ENCODE measurements at regions of chr3 and their contacts with region 1.

Region 1: DNA sequence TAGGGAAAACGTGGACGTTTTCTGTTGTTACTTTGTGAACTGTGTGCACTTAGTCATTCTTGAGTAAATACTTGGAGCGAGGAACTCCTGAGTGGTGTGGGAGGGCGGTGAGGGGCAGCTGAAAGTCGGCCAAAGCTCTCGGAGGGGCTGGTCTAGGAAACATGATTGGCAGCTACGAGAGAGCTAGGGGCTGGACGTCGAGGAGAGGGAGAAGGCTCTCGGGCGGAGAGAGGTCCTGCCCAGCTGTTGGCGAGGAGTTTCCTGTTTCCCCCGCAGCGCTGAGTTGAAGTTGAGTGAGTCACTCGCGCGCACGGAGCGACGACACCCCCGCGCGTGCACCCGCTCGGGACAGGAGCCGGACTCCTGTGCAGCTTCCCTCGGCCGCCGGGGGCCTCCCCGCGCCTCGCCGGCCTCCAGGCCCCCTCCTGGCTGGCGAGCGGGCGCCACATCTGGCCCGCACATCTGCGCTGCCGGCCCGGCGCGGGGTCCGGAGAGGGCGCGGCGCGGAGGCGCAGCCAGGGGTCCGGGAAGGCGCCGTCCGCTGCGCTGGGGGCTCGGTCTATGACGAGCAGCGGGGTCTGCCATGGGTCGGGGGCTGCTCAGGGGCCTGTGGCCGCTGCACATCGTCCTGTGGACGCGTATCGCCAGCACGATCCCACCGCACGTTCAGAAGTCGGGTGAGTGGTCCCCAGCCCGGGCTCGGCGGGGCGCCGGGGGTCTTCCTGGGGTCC is at the start of gene TGFBR2:
- DNase-seq: peak; percentile 5 to 89 (median 68)
- H3K4me3 ChIP-seq: peak within 1 kb of the TSS; percentile 46 to 89 (median 77)
- H3K27ac ChIP-seq: peak within 1 kb of the TSS in 56 of 59 donors; percentile 23 to 96 (median 83)
- H3K27me3 ChIP-seq: peaks cover 0 to 38% (median 0%) of the 10 kb centered on the region in 45 donors
- CTCF ChIP-seq: peak in 15 of 56 donors; percentile 8 to 33 (median 15)
- total RNA-seq, gene TGFBR2: 6.9 to 41.8 (median 15.9) TPM

Region 2: DNA sequence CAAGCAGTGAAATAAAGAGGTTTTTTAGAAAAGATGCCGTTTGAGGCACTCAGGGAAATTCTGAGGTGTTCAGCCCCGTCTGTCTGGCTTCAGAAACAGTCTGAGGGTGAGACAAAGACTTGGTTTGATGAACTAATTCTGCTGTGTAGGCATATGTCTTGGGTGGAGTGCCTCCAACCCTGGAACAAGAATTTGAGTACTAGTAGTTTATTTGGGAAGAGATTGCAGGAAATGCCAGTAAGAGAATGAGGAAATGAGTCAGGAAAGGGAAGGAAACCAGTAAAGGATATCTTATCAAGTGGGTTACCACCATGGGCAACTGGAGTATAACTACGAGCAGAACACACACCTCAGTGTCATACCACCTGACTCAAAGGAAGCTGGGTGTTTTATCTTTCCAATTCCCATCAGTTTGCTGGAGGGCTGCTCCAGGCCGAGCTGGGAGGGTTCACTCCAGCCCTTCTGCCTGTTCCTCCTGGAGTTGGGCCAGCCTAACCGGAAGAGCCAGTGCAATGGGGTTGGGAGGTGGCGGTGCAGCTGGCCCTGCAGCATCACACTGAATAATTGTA is 75.3 kb after region 1 on chr3:
- intact Hi-C with region 1: loop called in 1 of 2 experiments (anchors 5 kb)
- DNase-seq: peak in 4 of 10 donors; percentile 26 to 54 (median 39)
- H3K4me3 ChIP-seq: peak overlapping the region in 45 of 59 donors; percentile 0 to 59 (median 27)
- H3K27ac ChIP-seq: peak overlapping the region; percentile 15 to 97 (median 88)
- H3K27me3 ChIP-seq: no peaks in the 10 kb centered on the region
- CTCF ChIP-seq: no peak

Region 3: DNA sequence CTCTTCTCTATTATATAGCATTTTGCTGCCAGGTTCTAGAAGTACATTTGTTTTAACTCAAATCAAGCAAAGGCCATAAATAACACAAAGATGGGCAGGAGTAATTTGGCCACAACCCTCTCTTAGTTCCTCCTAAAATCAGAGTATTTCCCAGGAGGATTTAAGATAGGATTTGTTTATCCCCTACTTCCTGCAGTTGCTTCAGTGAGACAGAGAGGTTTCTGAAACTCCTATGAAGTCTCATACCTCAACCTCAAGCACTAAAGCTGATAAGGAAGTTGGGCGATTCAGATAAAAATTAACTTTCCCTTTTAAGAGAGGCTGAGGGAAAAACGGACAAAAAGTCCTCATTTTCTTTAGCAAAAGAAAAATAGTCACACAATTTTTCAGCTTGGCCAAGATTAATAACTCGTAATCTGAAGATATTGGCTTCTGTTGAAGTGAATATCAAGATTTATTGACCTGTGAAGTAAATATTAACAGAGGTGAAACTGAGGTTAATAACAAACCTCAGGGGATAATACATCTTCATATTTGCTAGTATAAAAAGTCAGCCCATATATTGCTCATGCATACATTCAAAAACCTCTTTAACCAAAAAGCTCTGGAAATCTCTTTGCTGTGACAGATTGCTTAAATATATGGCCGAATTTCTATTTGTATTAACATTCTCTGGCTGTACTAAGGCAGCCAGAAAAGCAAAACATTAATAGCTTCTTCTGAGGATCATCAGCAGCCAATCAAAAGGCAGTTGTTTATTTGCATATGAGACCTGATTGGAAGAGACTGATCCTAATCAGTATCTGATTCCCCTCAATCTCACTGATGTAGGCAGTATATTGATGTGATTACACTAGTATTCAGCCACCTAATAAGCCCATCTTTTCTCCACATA is 378.6 kb after region 1 on chr3:
- intact Hi-C with region 1: no loop called
- DNase-seq: no peak
- H3K4me3 ChIP-seq: no peak overlapping the region
- H3K27ac ChIP-seq: no peak overlapping the region
- H3K27me3 ChIP-seq: peaks cover 0 to 14% (median 0%) of the 10 kb centered on the region in 45 donors
- CTCF ChIP-seq: no peak